Activated naive CD4-positive, alpha-beta T cell treated with anti-CD3 and anti-CD28 coated beads, Interleukin-2, amount 10 ng/mL, durations not matched to agents 7 days and 5 days (primary cell): ENCODE measurements at regions of chr1 and their contacts with region 1.

Region 1: GRCh38 chr1:53485478-53486394 is 26.5 kb downstream of the DMRTB1 start:
- DNase-seq: peak; percentile 80
- H3K4me3 Mint-ChIP-seq: no peak overlapping the region
- H3K27ac Mint-ChIP-seq: no peak overlapping the region
- H3K4me1 Mint-ChIP-seq: no peaks in the 10 kb centered on the region
- H3K27me3 Mint-ChIP-seq: peaks cover 40% of the 10 kb centered on the region

Region 2: GRCh38 chr1:53681977-53682685 is 196.4 kb after region 1 on chr1:
- CTCF ChIA-PET with region 1: interaction called, 37 read pairs
- DNase-seq: peak; percentile 61
- H3K4me3 Mint-ChIP-seq: no peak overlapping the region
- H3K27ac Mint-ChIP-seq: no peak overlapping the region
- H3K4me1 Mint-ChIP-seq: no peaks in the 10 kb centered on the region
- H3K27me3 Mint-ChIP-seq: peaks cover 63% of the 10 kb centered on the region